GM23248 (cell line): ENCODE measurements at regions of chr9 and their contacts with region 1.

Region 1: GRCh38 chr9:94065535-94065961 is 18.7 kb upstream of the PTPDC1 start:
- DNase-seq: peak; percentile 85
- H3K4me3 ChIP-seq: no peak overlapping the region
- H3K27ac ChIP-seq: no peak overlapping the region
- H3K4me1 ChIP-seq: no peaks in the 10 kb centered on the region
- H3K27me3 ChIP-seq: no peaks in the 10 kb centered on the region

Region 2: DNA sequence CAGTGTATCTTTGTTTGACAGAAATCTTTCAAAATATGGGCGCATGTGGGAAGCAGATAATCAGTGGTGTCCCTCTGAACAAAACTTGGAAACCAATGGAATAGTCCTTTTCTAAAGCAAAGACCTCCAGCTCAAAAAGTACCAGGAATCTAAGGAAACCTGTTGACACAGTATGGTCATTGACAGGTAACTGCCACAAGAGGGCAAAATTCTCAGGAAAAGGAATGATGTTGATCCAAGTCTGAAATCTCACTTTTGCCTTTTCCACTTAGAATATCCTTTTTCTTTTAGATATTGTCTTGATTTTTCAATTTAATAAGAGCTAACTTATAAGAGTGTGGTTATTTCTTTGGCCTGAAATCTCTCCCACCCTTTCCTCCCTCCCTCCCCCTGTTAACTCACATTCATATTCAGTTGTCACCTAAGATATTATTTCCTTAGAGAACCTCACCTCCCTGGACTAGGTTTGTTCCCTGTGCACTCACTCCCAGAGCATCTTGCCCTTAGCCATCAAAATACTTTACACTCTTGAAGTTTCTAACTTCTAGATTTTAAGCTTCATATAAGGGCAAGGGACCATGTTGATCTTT is 51.4 kb before region 1 on chr9:
- in situ Hi-C with region 1: loop called (anchors 5 kb)
- DNase-seq: peak; percentile 67
- H3K4me3 ChIP-seq: no peak overlapping the region
- H3K27ac ChIP-seq: no peak overlapping the region
- H3K4me1 ChIP-seq: no peaks in the 10 kb centered on the region; the same call in 1 of the 2 replicates
- H3K27me3 ChIP-seq: no peaks in the 10 kb centered on the region

Region 3: DNA sequence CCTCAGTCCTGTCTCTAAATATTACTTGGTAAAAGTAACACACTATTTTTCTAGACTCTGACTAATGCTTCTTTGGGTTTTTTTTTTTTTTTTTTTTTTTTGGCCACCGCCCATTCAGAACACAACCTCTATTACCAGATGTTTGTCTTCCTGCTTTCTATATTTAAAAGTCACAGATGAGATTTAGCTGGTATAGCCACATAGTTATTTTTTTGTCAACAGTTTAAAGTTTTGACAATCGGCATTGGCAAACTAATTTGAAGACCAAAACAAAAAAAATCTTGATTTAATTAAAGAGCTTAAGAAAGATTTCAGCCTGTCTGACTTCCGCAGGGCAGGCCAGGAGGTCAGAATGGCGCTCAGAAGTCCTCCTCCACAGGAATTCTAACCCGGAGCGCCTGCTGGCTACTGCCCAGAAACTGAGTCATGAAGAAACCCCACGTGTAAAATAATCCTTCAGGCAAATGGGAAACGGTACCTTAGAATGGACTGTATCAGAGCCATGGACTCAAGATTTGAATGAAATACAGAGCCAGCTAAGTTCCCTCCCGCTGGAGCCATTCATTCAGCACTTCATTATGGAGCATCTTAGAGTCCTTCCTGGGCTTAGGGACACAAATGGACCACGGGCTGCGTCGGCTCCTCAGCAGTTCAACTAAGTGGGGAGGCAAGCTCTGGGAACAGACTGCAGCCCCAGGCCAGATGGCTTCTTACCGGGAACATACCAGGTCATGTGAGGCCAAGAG is 74.3 kb after region 1 on chr9:
- in situ Hi-C with region 1: no loop called
- DNase-seq: peak; percentile 93
- H3K4me3 ChIP-seq: peak overlapping the region; percentile 62
- H3K27ac ChIP-seq: peak overlapping the region; percentile 87
- H3K4me1 ChIP-seq: peaks cover 38% of the 10 kb centered on the region
- H3K27me3 ChIP-seq: no peaks in the 10 kb centered on the region

Region 4: DNA sequence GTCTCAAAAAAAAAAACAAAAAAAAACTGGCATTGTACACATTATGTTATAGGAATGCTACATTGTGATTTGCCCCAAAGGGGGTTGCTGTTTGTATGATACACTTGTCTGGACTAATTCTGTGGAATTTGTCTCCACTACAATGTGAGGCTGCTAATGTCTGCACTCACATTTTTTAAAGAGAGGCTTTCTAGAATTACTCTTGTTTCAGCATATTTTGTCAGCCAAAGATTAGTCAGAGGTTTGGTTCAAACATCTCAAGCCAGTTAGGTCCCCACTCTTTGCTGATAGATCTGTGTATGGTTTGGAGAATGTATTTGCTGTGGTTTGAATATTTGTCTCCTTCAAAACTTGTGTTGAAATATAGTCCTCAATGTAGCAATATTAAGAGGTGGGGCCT is 134.2 kb after region 1 on chr9:
- in situ Hi-C with region 1: loop called (anchors 10 kb)
- DNase-seq: no peak
- H3K4me3 ChIP-seq: no peak overlapping the region
- H3K27ac ChIP-seq: no peak overlapping the region
- H3K4me1 ChIP-seq: no peaks in the 10 kb centered on the region
- H3K27me3 ChIP-seq: no peaks in the 10 kb centered on the region